Activated CD4-positive, alpha-beta T cell treated with anti-CD3 and anti-CD28 coated beads, Interleukin-2, amount 10 ng/mL, durations not matched to agents 24 days and 14 days (primary cell): ENCODE measurements at regions of chr18 and their contacts with region 1.

Region 1: DNA sequence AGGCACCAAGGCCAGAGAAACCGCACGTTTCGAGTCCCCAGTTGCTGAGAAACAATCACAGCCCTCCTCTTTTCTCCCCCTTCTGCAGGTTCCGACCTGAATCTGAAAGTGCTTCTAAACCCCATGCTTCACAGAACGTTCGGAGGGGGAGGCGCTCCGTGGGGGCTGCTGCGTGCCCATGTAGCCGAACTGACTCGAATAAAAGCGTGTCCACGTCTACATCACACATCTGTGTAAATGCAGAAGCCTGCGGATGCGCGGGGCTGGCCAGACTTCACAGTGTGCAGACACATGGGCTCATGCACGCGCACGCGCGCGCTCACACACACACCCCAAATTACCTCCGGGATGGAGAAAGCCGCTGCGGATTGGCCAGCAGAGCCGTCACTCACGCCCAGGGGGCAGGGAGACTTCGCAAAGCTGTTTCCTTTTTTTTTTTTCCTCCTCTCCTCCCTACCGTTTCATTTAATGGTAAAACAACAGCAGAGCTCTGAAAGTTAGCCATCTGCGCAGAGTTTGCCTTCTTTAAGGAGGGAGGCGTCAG is 2.3 kb downstream of the ZNF516 start:
- DNase-seq: peak; percentile 99
- H3K4me3 Mint-ChIP-seq: peak overlapping the region; percentile 97
- H3K27ac Mint-ChIP-seq: peak overlapping the region; percentile 84
- H3K4me1 Mint-ChIP-seq: peaks cover 31% of the 10 kb centered on the region
- H3K27me3 Mint-ChIP-seq: peaks cover 74% of the 10 kb centered on the region

Region 2: DNA sequence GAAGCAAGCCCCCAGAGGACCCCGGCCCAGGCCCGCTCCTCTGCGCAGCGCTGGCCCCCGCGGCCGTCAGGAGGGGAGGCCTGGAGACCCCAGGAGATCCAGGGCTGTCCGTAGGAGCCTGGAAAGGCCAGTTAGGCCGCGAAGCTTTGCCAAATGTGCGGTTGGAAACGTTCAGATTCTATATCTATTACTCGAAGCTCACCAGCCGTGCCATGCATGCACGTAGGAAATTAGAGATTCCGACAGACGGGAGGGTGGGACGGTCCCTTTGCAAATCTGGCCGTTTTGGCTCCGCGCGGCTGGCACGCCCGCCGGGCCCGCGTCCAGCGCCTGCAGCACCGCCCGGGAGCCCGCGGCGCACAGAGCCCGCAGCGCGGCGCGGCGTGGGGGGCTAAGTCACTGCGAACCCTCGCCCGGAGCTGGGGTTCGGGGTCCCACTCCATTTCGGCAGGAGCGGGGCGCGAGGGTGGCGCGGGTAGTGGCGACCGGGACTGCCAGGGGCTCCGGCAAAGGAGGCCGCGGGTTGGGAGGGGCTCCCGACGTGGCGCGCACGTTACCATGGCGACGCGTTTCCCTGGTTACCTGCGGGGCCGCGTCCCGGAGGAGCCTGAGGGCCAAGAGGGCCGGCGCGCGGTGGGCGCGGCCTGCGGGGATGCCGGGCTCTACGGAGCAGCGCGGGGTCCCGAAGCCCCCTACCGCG is 576.6 kb before region 1 on chr18:
- intact Hi-C with region 1: no loop called
- DNase-seq: no peak
- H3K4me3 Mint-ChIP-seq: no peak overlapping the region
- H3K27ac Mint-ChIP-seq: no peak overlapping the region
- H3K4me1 Mint-ChIP-seq: no peaks in the 10 kb centered on the region
- H3K27me3 Mint-ChIP-seq: peaks cover 17% of the 10 kb centered on the region

Region 3: GRCh38 chr18:76410660-76411417 is 81.9 kb before region 1 on chr18:
- intact Hi-C with region 1: loop called (anchors 5 kb)
- DNase-seq: no peak
- H3K4me3 Mint-ChIP-seq: no peak overlapping the region
- H3K27ac Mint-ChIP-seq: no peak overlapping the region
- H3K4me1 Mint-ChIP-seq: peaks cover 8% of the 10 kb centered on the region
- H3K27me3 Mint-ChIP-seq: peaks cover 19% of the 10 kb centered on the region

Region 4: GRCh38 chr18:76451396-76452331 is 41.1 kb before region 1 on chr18:
- intact Hi-C with region 1: loop called (anchors 1 kb)
- DNase-seq: no peak
- H3K4me3 Mint-ChIP-seq: peak overlapping the region; percentile 81
- H3K27ac Mint-ChIP-seq: no peak overlapping the region
- H3K4me1 Mint-ChIP-seq: peaks cover 11% of the 10 kb centered on the region
- H3K27me3 Mint-ChIP-seq: peaks cover 43% of the 10 kb centered on the region

Region 5: GRCh38 chr18:76476665-76477561 is 15.8 kb before region 1 on chr18:
- intact Hi-C with region 1: no loop called
- DNase-seq: no peak
- H3K4me3 Mint-ChIP-seq: no peak overlapping the region
- H3K27ac Mint-ChIP-seq: no peak overlapping the region
- H3K4me1 Mint-ChIP-seq: peaks cover 9% of the 10 kb centered on the region
- H3K27me3 Mint-ChIP-seq: peaks cover 28% of the 10 kb centered on the region

Region 6: DNA sequence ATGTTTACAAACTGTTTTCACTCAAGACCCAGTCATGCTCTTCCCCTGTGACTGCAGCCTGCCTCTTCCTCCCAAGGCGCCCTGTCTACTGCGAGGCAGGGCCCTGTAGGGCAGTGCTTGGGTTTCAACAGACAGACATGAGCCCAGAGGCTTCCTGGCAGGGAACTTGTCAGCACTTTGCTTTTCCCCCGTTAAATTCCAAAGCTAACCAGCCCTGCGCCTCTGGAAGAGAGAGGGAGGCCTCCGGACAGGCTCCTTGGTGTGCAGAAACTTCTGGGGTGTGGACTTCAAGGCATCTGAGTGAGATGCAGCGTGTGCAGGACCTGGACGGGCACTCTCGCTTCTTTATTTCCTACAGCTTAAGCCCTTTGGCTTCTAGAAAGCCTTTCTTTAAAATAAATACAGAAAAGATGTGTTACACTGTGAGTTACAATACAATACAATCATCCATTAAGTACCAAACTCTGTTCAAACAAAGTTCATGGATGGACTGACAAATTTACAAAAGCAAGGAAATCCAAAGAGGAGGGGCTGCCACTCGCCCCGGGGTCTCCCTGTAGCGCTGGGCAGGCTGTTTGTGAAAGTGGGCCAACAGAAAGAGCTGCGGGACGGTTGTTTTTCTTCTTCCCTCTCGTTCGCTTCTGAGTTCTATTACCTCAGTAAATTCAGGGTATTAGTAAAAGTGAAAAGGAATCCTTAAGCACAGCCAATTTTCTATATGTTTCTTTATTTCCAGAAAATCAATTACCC is 11.1 kb after region 1 on chr18:
- intact Hi-C with region 1: no loop called
- DNase-seq: no peak
- H3K4me3 Mint-ChIP-seq: no peak overlapping the region
- H3K27ac Mint-ChIP-seq: no peak overlapping the region
- H3K4me1 Mint-ChIP-seq: no peaks in the 10 kb centered on the region
- H3K27me3 Mint-ChIP-seq: peaks cover 24% of the 10 kb centered on the region

Region 7: GRCh38 chr18:76725445-76725844 is 232.7 kb after region 1 on chr18:
- intact Hi-C with region 1: no loop called
- DNase-seq: no peak
- H3K4me3 Mint-ChIP-seq: no peak overlapping the region
- H3K27ac Mint-ChIP-seq: no peak overlapping the region
- H3K4me1 Mint-ChIP-seq: peaks cover 45% of the 10 kb centered on the region
- H3K27me3 Mint-ChIP-seq: peaks cover 36% of the 10 kb centered on the region

Region 8: GRCh38 chr18:76822510-76823160 is 329.9 kb after region 1 on chr18 and contains the start of gene ZNF236:
- intact Hi-C with region 1: loop called (anchors 2 kb)
- DNase-seq: peak; percentile 90
- H3K4me3 Mint-ChIP-seq: peak within 1 kb of the TSS; percentile 95
- H3K27ac Mint-ChIP-seq: peak within 1 kb of the TSS; percentile 95
- H3K4me1 Mint-ChIP-seq: peaks cover 43% of the 10 kb centered on the region
- H3K27me3 Mint-ChIP-seq: no peaks in the 10 kb centered on the region
- total RNA-seq, gene ZNF236: 17.5 and 22.0 TPM in 2 replicates

Region 9: DNA sequence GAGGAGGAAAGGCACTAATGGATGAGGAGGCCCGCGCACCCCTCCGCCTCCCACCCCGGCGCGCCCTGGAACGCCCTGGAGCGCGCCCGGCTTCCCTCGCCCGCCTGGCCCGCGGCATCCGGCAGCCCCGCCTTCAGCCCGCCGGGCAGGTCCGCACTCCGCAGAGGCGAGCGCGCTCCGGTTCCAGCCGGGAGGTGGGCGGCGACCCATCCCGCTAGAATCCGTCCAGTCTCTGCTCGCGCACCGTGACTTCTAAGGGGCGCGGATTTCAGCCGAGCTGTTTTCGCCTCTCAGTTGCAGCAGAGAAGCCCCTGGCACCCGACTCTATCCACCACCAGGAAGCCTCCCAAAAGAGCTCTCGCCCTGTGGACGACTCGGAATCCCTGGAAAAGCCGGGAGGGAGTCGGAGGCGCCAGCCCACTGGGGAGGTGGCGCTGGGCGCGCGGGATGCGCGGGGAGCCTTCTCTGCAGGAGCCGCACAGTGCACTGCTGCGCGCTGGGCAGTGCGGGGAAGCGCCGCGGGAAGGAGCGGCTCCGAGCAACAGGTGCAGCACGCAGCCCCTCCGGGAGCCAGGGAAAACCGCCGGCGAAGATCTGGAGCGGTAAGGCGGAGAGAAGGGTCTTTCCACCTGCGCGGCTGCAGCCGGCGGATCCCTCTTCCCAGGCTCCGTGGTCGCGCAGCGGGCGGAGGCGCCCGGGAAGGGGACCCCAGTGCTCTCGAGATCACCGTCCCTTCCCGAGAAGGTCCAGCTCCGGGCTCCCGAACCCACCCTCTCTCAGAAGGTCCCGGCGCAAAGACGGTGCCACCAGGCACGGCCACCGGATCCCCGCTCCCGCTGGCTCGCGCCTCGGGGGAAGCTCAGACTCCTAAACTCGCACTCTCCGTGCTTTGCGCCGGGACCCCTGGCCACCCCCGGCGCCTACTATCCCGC is 757.1 kb after region 1 on chr18 and contains the start of gene GALR1:
- intact Hi-C with region 1: loop called (anchors 10 kb)
- DNase-seq: no peak
- H3K4me3 Mint-ChIP-seq: peak within 1 kb of the TSS; percentile 57
- H3K27ac Mint-ChIP-seq: peak within 1 kb of the TSS; percentile 72
- H3K4me1 Mint-ChIP-seq: peaks cover 4% of the 10 kb centered on the region
- H3K27me3 Mint-ChIP-seq: peaks cover 59% of the 10 kb centered on the region
- total RNA-seq, gene GALR1: not detected in 2 replicates